Naive thymus-derived CD4-positive, alpha-beta T cell (primary cell): ENCODE measurements at regions of chr6 and their contacts with region 1.

Region 1: DNA sequence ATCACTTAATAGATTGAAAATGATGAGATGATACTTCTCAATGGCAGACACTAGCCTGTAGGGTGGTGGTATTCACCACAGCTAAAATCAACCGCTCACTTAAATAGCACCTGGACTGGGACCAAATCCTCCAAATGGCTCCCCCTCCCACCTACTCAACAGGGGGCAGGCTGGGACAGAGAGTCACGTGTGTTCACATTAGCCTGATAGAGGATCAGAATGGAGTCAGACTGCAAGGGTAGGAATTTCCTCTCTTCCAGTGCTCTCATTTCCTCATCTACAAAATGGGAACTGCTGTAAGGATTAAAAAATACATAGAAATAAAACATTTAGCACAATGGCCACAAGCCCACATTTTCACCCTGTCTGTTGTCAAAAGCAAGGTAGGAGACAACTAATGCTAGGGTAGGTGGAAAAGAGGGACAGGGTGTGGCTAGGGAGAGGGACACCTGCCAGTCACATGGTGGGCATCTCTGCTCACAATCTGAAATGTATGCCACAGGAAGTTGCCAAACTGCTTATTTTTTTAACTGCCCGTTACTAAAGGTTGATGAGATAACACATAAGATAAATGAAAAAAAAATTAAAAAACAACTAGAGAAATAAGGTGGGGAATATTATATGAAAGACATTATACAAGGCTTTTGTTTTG is 55.3 kb downstream of the BACH2 start:
- DNase-seq: no peak
- ATAC-seq: peak; percentile 18
- H3K4me3 ChIP-seq: no peak overlapping the region
- H3K4me3 Mint-ChIP-seq: peak overlapping the region in 7 of 10 donors; percentile 12 to 56 (median 33)
- H3K27ac ChIP-seq: peak overlapping the region; percentile 25
- H3K27ac Mint-ChIP-seq: peak overlapping the region in 8 of 9 donors; percentile 65 to 94 (median 84)
- H3K4me1 ChIP-seq: peaks cover 0 to 44% of the 10 kb centered on the region in 2 donors
- H3K4me1 Mint-ChIP-seq: peaks cover 30 to 89% (median 76%) of the 10 kb centered on the region in 7 donors
- H3K27me3 ChIP-seq: no peaks in the 10 kb centered on the region
- H3K27me3 Mint-ChIP-seq: no peaks in the 10 kb centered on the region

Region 2: DNA sequence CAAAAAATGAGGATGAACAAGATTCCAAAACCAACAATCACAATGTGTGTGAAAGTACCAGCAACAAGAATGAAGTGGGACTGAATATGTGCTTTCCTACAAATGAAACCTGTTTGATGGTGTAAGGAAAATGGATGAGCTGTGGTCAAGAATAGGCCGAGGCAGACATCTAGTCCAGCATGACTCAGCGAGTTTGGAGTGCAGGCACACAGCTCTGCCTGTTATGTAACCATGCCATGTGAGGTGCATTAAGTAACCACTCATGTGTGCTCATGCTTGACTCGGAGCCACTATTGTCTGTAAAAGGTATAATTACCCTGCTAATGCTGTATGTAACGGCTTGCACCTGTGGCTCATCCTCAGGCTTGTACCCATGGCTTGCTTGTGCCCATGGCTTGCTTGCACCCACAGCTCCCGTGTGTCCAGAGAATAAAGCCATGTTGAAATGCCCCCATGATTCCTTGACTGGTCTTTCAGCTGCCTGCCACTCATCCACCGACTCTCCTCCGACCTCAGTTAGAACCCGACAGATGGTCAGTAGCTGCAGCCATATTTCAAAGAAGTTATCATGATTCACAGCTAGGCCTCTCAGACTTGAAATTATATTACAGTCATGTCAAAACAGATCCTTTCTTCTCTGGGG is 43.4 kb before region 1 on chr6:
- CTCF ChIA-PET with region 1: no interaction called
- POLR2A ChIA-PET with region 1: no interaction called
- intact Hi-C with region 1: no loop called
- DNase-seq: no peak
- ATAC-seq: no peak
- H3K4me3 ChIP-seq: no peak overlapping the region
- H3K4me3 Mint-ChIP-seq: peak overlapping the region in 4 of 10 donors; percentile 36 to 46 (median 38)
- H3K27ac ChIP-seq: peak overlapping the region; percentile 49
- H3K27ac Mint-ChIP-seq: peak overlapping the region; percentile 60 to 90 (median 75)
- H3K4me1 ChIP-seq: peaks cover 0 to 52% of the 10 kb centered on the region in 2 donors
- H3K4me1 Mint-ChIP-seq: peaks cover 30 to 94% (median 76%) of the 10 kb centered on the region in 7 donors
- H3K27me3 ChIP-seq: no peaks in the 10 kb centered on the region
- H3K27me3 Mint-ChIP-seq: no peaks in the 10 kb centered on the region

Region 3: DNA sequence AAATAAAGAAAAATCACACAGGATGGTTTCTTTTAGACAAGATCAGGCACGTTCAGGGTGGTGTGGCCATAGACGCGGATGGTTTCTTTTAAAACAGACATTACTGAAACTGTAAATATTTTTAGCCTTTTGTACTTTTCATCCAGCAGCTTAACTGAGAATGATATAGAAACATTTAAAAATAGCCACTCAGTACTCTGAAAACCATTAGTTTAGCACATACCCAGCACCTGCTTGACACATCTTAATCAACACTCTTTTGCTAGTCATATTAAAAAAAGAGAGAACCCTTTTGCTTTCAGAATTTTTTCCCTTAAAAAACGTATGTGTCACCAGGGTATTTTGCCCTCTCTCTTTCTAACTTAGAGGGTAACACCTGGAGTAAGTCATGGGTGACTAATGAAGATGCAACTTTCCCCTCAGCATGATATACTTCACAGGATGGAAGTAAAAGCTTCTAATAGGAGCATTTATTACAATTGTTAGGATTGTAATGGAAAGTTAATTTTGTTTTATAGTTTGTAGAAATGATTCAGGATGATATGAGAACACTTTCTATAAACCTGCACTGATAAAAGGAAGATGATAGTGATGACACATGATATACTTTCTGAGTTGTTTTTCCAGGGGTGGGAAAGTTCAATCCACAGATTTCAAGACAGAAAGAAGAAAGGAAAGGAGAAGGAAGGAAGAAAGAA is 10.1 kb after region 1 on chr6:
- CTCF ChIA-PET with region 1: interaction called, 8 read pairs
- POLR2A ChIA-PET with region 1: interaction called, 10 read pairs
- intact Hi-C with region 1: loop called (anchors 1 kb)
- DNase-seq: no peak
- ATAC-seq: no peak
- H3K4me3 ChIP-seq: no peak overlapping the region
- H3K4me3 Mint-ChIP-seq: peak overlapping the region in 8 of 10 donors; percentile 7 to 71 (median 48)
- H3K27ac ChIP-seq: peak overlapping the region; percentile 53
- H3K27ac Mint-ChIP-seq: peak overlapping the region; percentile 49 to 98 (median 85)
- H3K4me1 ChIP-seq: peaks cover 0 to 55% of the 10 kb centered on the region in 2 donors
- H3K4me1 Mint-ChIP-seq: peaks cover 37 to 99% (median 90%) of the 10 kb centered on the region in 7 donors
- H3K27me3 ChIP-seq: no peaks in the 10 kb centered on the region
- H3K27me3 Mint-ChIP-seq: no peaks in the 10 kb centered on the region